Breast epithelium (tissue), 4 donors: ENCODE measurements at regions of chr5 and their contacts with region 1.

Region 1: GRCh38 chr5:31664566-31664965 is 25.6 kb downstream of the PDZD2 start:
- DNase-seq: no peak
- H3K4me3 ChIP-seq: no peak overlapping the region
- H3K27ac ChIP-seq: no peak overlapping the region
- H3K4me1 ChIP-seq: no peaks in the 10 kb centered on the region
- H3K27me3 ChIP-seq: no peaks in the 10 kb centered on the region
- CTCF ChIP-seq: no peak
- POLR2A ChIP-seq: no peak

Region 2: DNA sequence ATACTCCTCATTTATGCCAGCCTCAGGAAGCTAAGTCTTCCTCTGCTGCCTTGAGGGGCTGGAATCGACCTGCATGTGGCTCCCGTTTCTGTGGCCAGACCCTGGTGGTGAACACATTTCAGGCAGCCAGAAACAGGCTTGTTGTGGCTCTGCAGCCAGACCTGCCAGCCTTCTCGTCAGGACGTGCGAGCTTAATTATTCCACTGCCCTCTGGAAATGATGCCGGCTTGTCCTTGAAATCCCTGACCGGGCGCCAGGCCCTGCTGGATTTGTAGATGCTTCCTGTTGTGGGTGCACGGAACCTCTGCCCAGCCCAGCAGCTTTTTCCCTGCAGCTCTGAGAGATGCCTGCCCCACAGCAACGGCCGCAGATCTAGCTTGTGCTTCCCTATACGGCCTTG is 16.0 kb after region 1 on chr5:
- intact Hi-C with region 1: loop called (anchors 1 kb)
- DNase-seq: peak in 1 of 2 donors; percentile 21
- H3K4me3 ChIP-seq: no peak overlapping the region
- H3K27ac ChIP-seq: no peak overlapping the region
- H3K4me1 ChIP-seq: no peaks in the 10 kb centered on the region
- H3K27me3 ChIP-seq: no peaks in the 10 kb centered on the region
- CTCF ChIP-seq: no peak
- POLR2A ChIP-seq: no peak